GM12878 (cell line): ENCODE measurements at regions of chr17 and their contacts with region 1.

Region 1: GRCh38 chr17:49677933-49678847 is at the start of gene SPOP:
- DNase-seq: peak; percentile 96
- ATAC-seq: peak; percentile 86
- H3K4me3 ChIP-seq: peak within 1 kb of the TSS; percentile 80
- H3K27ac ChIP-seq: peak within 1 kb of the TSS; percentile 89
- H3K4me1 ChIP-seq: peaks cover 4% of the 10 kb centered on the region; the same call in 1 of the 2 replicates
- H3K27me3 ChIP-seq: no peaks in the 10 kb centered on the region; a peak in 1 of 4 replicates
- CTCF ChIP-seq: no peak
- EP300 ChIP-seq: 0 out of 4 replicates have a peak, but pooled peaks of 1 of the 2 experiments have one; percentile 51
- POLR2A ChIP-seq: peak; percentile 90
- RAD21 ChIP-seq: no peak
- polyA plus RNA-seq, gene SPOP: 35.1 to 39.0 TPM

Region 2: GRCh38 chr17:49523706-49524472 is 154.3 kb before region 1 on chr17:
- CTCF ChIA-PET with region 1: no interaction called
- POLR2A ChIA-PET with region 1: no interaction called
- RAD21 ChIA-PET with region 1: no interaction called
- SMC1A ChIA-PET with region 1: no interaction called
- in situ Hi-C with region 1: no loop called
- intact Hi-C with region 1: no loop called
- DNase-seq: no peak
- ATAC-seq: no peak; the same call in 2 of the 3 replicates
- H3K4me3 ChIP-seq: no peak overlapping the region
- H3K27ac ChIP-seq: no peak overlapping the region
- H3K4me1 ChIP-seq: no peaks in the 10 kb centered on the region
- H3K27me3 ChIP-seq: no peaks in the 10 kb centered on the region
- CTCF ChIP-seq: no peak
- EP300 ChIP-seq: no peak
- POLR2A ChIP-seq: no peak
- RAD21 ChIP-seq: no peak

Region 3: DNA sequence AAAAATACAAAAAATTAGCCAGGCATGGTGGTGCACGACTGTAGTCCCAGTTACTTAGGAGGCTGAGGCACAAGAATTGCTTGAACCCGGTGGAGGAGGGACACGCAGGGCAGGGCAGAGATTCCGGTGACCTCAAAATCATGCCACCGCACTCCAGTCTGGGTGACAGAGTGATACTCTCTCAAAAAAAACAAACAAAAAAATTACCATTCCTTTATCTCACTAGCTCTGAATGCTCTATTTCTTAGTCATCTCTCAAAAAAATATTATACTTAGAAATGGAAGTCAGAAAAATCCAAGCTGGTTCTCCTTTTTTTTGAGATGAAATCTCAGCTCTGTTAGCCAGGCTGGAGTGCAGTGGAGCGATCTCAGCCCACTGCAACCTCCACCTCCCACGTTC is 41.1 kb before region 1 on chr17:
- CTCF ChIA-PET with region 1: interaction called, 3 read pairs
- POLR2A ChIA-PET with region 1: interaction called, 9 read pairs
- RAD21 ChIA-PET with region 1: interaction called, 3 read pairs
- SMC1A ChIA-PET with region 1: interaction called, 5 read pairs
- in situ Hi-C with region 1: no loop called
- intact Hi-C with region 1: loop called (anchors 5 kb)
- DNase-seq: no peak
- ATAC-seq: no peak
- H3K4me3 ChIP-seq: no peak overlapping the region
- H3K27ac ChIP-seq: no peak overlapping the region
- H3K4me1 ChIP-seq: no peaks in the 10 kb centered on the region
- H3K27me3 ChIP-seq: no peaks in the 10 kb centered on the region
- CTCF ChIP-seq: no peak
- EP300 ChIP-seq: no peak
- POLR2A ChIP-seq: no peak
- RAD21 ChIP-seq: no peak

Region 4: GRCh38 chr17:49646391-49647255 is 31.6 kb before region 1 on chr17:
- CTCF ChIA-PET with region 1: interaction called, 7 read pairs
- POLR2A ChIA-PET with region 1: interaction called, 7 read pairs
- RAD21 ChIA-PET with region 1: interaction called, 7 read pairs
- SMC1A ChIA-PET with region 1: interaction called, 11 read pairs
- in situ Hi-C with region 1: no loop called
- intact Hi-C with region 1: no loop called
- DNase-seq: peak; percentile 45
- ATAC-seq: peak; percentile 95
- H3K4me3 ChIP-seq: 0 out of 2 replicates have a peak overlapping the region, but pooled peaks have one; percentile 6
- H3K27ac ChIP-seq: peak overlapping the region; percentile 79
- H3K4me1 ChIP-seq: peaks cover 27% of the 10 kb centered on the region
- H3K27me3 ChIP-seq: no peaks in the 10 kb centered on the region
- CTCF ChIP-seq: no peak
- EP300 ChIP-seq: no peak
- POLR2A ChIP-seq: no peak
- RAD21 ChIP-seq: no peak

Region 5: GRCh38 chr17:49662930-49663329 is 15.3 kb before region 1 on chr17:
- CTCF ChIA-PET with region 1: interaction called, 4 read pairs
- POLR2A ChIA-PET with region 1: interaction called, 8 read pairs
- RAD21 ChIA-PET with region 1: interaction called, 3 read pairs
- SMC1A ChIA-PET with region 1: interaction called, 13 read pairs
- in situ Hi-C with region 1: no loop called
- intact Hi-C with region 1: no loop called
- DNase-seq: no peak
- ATAC-seq: no peak
- H3K4me3 ChIP-seq: no peak overlapping the region
- H3K27ac ChIP-seq: no peak overlapping the region
- H3K4me1 ChIP-seq: peaks cover 10% of the 10 kb centered on the region
- H3K27me3 ChIP-seq: no peaks in the 10 kb centered on the region
- CTCF ChIP-seq: no peak
- EP300 ChIP-seq: no peak
- POLR2A ChIP-seq: no peak
- RAD21 ChIP-seq: no peak